ENCODE measurements at regions of chr2 and their contacts with region 1.

Region 1: DNA sequence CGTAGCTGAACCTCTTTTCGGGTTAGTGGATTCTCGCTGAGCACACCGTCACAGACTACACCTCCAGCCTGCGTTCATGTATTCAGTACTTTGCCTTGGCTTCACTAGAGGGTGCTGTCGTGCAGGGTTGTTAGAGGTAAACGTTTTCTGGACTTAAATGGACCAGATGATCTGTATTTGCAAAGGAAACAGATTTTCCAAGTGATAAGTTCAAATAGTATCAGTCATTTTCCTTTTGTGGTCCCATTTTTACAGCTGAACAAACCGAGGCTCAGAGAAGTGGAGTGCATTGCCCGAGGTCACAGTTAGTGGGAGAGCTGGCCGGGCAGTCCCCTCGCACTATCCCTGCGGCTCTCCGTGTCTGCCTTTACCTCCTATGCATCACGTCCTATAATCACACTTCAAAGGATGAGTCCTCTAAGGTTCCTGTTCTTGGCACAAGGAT is 125.9 kb downstream of the MAP4K4 start:
- DNase-seq: peak; percentile 74
- H3K4me3 ChIP-seq: no peak overlapping the region
- H3K27ac ChIP-seq: no peak overlapping the region
- H3K4me1 ChIP-seq: peaks cover 5% of the 10 kb centered on the region
- H3K27me3 ChIP-seq: no peaks in the 10 kb centered on the region
- CTCF ChIP-seq: peak; percentile 73

Region 2: DNA sequence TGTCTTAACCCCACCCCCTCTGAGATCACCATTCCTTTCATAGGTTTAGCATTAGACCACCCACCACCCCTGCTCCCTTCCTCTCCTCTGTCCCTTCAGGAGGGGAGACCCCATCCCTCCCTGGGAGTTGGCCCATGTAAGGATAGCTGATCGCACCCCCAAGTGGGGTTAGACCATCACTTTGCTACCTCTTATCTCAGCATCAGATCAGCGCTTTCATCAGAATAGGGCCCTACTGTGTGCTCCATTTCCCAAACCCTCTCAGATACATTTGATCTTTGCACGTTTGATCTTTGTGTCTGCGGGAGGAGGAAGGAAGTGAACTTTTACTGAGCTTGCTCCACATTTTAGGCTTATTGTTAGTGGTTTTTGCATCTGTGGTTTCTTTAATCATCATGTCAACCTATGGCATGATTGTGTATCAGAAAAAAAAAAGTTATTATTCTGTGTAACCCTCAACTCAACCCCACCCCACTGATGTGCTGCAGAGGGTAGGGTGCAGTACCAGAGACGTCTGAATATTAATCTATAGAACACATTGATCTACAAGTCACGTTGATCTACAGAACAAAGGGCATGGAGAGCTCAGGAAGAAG is 1179.4 kb before region 1 on chr2:
- intact Hi-C with region 1: no loop called
- DNase-seq: no peak
- H3K4me3 ChIP-seq: no peak overlapping the region
- H3K27ac ChIP-seq: no peak overlapping the region
- H3K4me1 ChIP-seq: no peaks in the 10 kb centered on the region
- H3K27me3 ChIP-seq: no peaks in the 10 kb centered on the region
- CTCF ChIP-seq: no peak

Region 3: DNA sequence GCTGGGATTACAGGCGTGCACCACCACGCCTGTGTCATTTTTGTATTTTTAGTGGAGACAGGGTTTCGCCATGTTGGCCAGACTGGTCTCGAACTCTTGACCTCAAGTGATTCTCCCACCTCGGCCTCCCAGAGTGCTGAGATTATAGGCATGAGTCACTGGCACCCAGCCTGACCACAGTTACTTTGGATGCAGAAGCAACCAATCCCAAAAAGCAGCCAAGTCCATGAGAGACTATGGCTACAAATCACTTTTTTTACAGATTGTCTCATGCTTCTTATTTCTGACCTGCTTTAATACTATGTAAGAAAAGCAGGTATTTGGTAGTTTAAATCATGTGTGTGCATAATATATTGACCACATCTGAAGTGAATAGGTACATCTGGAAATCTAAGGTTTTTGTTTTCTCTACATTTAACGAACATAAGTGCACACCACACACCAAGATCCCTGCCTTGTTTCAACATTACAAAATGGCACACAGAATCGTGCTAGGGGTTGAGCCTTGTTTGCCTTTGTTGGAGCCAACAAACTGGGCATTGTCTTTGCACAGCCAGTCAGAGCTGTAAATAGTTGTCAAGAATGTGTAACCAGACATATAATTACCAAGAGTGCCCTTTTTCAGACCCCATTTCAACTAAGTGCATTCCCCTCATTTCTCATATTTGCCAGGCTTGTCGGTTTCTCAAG is 144.2 kb before region 1 on chr2:
- intact Hi-C with region 1: no loop called
- DNase-seq: no peak
- H3K4me3 ChIP-seq: no peak overlapping the region
- H3K27ac ChIP-seq: no peak overlapping the region
- H3K4me1 ChIP-seq: no peaks in the 10 kb centered on the region
- H3K27me3 ChIP-seq: no peaks in the 10 kb centered on the region
- CTCF ChIP-seq: no peak

Region 4: DNA sequence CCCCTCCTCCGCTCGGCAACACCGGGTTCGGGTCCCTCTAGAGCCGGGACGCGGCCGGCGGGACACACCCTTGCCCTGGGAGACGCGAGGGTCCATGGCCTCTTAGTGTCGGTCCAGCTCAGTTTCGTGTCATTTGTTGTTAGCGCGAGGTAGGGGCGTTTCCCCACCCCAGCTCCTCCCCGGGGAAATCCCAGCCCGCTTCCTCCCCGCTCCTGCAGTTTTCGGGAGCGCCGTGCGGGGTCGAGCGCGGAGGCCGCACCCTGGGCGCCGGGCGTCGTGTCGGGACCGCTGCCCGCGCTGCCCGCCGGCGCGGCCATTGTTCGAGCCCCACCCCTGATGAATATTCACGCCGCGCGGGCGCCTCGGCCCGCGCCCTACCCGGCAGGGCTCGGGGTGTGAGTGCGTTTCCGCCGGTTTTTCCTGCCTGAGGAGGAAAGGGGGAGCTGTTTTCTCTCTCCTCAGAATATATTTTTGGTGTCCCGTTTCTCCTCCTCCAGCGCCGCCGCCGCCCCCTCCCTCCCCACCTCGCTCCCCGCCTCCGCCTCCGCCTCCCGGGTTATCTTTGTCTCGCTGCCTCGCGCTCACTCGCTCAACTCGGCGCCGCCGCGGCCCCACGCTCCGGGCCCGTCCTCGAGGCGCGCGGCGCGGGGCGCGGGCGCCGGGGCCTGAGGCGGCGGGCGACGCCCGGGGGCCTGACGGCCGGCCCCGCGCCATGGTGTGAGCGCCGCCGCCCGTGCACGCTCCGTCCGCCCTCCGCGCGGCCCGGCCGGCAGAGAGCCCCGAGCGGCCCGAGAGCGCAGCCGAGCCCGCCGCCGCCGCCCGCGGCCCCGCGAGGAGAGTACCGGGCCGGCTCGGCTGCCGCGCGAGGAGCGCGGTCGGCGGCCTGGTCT is 126.0 kb before region 1 on chr2 and contains the start of gene MAP4K4:
- intact Hi-C with region 1: loop called (anchors 10 kb)
- DNase-seq: peak; percentile 79
- H3K4me3 ChIP-seq: peak within 1 kb of the TSS; percentile 65
- H3K27ac ChIP-seq: peak within 1 kb of the TSS; percentile 55
- H3K4me1 ChIP-seq: no peaks in the 10 kb centered on the region
- H3K27me3 ChIP-seq: no peaks in the 10 kb centered on the region
- CTCF ChIP-seq: no peak
- total RNA-seq, gene MAP4K4: 26.8 to 30.7 TPM